ENCODE measurements at regions of chr19 and their contacts with region 1.

Region 1: GRCh38 chr19:5154129-5154798 is 185.4 kb downstream of the KDM4B start:
- DNase-seq: peak; percentile 90
- ATAC-seq: peak; percentile 87
- H3K4me3 Mint-ChIP-seq: no peak overlapping the region
- H3K27ac Mint-ChIP-seq: no peak overlapping the region
- H3K4me1 Mint-ChIP-seq: peaks cover 13% of the 10 kb centered on the region
- H3K27me3 Mint-ChIP-seq: peaks cover 5% of the 10 kb centered on the region
- CTCF ChIP-seq: peak; percentile 63

Region 2: DNA sequence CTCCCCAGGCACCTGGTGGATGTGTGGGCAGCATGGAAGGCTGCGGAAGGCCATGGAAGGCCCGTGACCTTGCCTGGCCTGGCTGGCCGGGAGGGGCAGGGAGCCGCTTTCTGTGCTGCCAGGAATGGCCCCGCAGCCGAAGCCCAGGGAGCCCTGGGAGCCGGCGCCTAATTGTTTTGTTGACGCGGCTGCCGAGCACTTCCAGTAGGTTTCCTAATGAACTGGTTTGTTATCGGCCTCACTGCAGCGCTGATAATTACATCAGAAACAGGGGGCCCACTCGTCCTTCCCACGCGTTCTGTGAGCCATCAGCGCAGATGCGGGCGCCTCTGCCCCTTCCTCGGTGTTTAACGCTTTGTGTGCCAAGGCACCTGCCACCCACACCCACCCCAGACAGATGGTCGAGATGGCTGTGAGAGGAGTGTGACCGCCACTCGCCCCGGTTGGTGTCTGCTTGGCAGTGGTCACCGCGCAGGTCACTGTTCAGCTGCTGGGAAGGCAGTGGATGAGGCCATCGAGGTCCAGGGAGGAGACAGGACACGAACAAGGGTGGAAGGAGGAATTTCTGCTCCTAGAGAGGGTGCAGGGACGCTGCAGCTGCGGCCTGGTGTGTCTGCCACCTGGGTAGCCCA is 60.9 kb before region 1 on chr19:
- CTCF ChIA-PET with region 1: no interaction called
- POLR2A ChIA-PET with region 1: no interaction called
- DNase-seq: no peak
- ATAC-seq: no peak
- H3K4me3 Mint-ChIP-seq: no peak overlapping the region
- H3K27ac Mint-ChIP-seq: no peak overlapping the region; the same call in 1 of the 2 replicates
- H3K4me1 Mint-ChIP-seq: peaks cover 4% of the 10 kb centered on the region; the same call in 1 of the 2 replicates
- H3K27me3 Mint-ChIP-seq: no peaks in the 10 kb centered on the region
- CTCF ChIP-seq: no peak

Region 3: DNA sequence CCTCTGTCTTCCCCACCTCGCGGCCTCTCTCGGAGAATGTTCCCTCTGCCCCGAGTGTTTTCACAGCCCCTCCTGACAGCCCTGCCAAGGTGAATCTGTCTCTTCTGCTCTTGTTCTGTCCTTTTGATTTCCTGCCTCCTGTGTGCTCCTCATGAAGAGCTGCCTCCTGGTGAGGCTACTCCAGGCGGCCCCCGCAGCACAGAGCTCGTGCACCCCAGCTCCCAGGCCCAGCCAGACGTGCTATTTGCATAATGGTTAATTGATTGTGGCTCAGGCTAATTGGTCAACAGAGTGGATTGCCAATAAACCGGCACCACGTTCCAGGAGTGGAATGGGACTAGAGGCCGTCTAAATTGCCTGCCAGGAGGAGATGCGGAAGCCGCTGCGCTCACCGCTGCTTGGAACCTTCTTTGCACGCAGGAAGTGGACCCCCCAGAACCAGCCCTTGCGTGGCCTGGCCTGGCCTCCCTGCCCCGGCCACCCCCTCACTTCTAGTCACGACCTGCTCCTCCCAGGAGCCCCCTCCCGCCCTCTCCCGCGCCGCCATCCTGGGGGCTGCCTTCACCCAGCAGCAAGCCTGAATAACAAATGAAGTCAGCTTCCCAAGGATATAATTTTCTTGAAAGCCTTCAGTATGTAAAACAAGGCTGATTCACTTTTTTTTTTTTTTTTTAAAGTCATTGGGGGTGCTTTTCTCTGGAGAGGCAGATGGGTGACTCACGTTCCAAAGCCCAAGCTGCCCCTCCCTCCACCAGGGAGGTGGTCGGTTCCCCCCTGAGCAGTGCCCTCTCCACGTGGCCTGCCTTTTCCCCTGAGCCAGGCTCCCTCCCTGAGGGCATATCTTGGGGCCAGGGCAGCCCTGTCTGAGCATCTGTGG is 41.3 kb before region 1 on chr19:
- CTCF ChIA-PET with region 1: interaction called, 11 read pairs
- POLR2A ChIA-PET with region 1: no interaction called
- DNase-seq: no peak
- ATAC-seq: no peak
- H3K4me3 Mint-ChIP-seq: no peak overlapping the region
- H3K27ac Mint-ChIP-seq: peak overlapping the region; percentile 83
- H3K4me1 Mint-ChIP-seq: peaks cover 30% of the 10 kb centered on the region
- H3K27me3 Mint-ChIP-seq: no peaks in the 10 kb centered on the region
- CTCF ChIP-seq: no peak

Region 4: GRCh38 chr19:5128251-5128935 is 25.9 kb before region 1 on chr19:
- CTCF ChIA-PET with region 1: interaction called, 12 read pairs
- POLR2A ChIA-PET with region 1: no interaction called
- DNase-seq: no peak
- ATAC-seq: peak; percentile 9; the same call in 1 of the 2 replicates
- H3K4me3 Mint-ChIP-seq: no peak overlapping the region
- H3K27ac Mint-ChIP-seq: no peak overlapping the region
- H3K4me1 Mint-ChIP-seq: peaks cover 48% of the 10 kb centered on the region
- H3K27me3 Mint-ChIP-seq: no peaks in the 10 kb centered on the region
- CTCF ChIP-seq: no peak

Region 5: GRCh38 chr19:5138606-5139582 is 15.4 kb before region 1 on chr19:
- CTCF ChIA-PET with region 1: interaction called, 31 read pairs
- POLR2A ChIA-PET with region 1: no interaction called
- DNase-seq: no peak
- ATAC-seq: no peak
- H3K4me3 Mint-ChIP-seq: no peak overlapping the region
- H3K27ac Mint-ChIP-seq: no peak overlapping the region
- H3K4me1 Mint-ChIP-seq: no peaks in the 10 kb centered on the region
- H3K27me3 Mint-ChIP-seq: no peaks in the 10 kb centered on the region
- CTCF ChIP-seq: no peak

Region 6: GRCh38 chr19:5170329-5170745 is 16.1 kb after region 1 on chr19:
- CTCF ChIA-PET with region 1: interaction called, 8 read pairs
- POLR2A ChIA-PET with region 1: interaction called, 10 read pairs
- DNase-seq: peak; percentile 82
- ATAC-seq: peak; percentile 68
- H3K4me3 Mint-ChIP-seq: no peak overlapping the region
- H3K27ac Mint-ChIP-seq: no peak overlapping the region
- H3K4me1 Mint-ChIP-seq: no peaks in the 10 kb centered on the region
- H3K27me3 Mint-ChIP-seq: peaks cover 8% of the 10 kb centered on the region; the same call in 1 of the 2 replicates
- CTCF ChIP-seq: peak; percentile 81

Region 7: DNA sequence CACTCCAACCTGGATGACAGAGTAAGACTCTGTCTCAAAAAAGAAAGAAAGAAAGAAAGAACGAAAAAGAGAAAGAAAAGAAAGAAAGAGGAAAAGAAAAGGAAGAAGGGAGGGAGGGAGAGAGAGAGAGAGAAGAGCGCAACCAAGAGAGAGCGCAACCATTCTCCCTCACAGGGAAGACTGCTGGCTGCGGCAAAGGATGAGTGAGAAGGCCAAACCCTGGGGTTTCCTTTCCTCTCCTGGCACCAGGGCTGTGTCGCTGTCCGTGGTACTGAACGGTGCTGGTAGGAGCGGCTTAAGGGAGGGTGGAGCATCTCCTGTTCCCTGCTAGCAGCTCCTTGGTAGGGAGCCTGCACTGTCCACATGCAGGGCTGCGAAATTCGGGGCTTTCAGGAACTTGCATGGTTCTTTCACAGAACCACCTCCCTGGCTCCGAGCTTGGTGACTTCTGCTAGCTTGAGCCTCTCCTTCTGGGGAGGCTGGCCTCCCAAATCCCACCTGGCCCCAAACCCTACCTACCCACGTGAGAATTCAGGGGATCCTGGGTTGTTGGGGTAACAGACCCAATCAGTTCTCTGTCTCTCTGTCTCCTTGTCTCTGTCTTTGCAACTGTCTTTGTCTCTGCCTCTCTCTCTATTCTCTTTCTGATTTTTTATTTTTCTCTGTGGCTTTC is 249.8 kb after region 1 on chr19:
- CTCF ChIA-PET with region 1: no interaction called
- POLR2A ChIA-PET with region 1: no interaction called
- DNase-seq: peak; percentile 98
- ATAC-seq: peak; percentile 100
- H3K4me3 Mint-ChIP-seq: no peak overlapping the region
- H3K27ac Mint-ChIP-seq: no peak overlapping the region
- H3K4me1 Mint-ChIP-seq: 0 out of 2 replicates have a peak, but pooled peaks cover 3% of the 10 kb centered on the region
- H3K27me3 Mint-ChIP-seq: peaks cover 43% of the 10 kb centered on the region
- CTCF ChIP-seq: no peak

Measured in WTC11 (cell line).